MCF 10A (cell line): ENCODE measurements at regions of chr7 and their contacts with region 1.

Region 1: DNA sequence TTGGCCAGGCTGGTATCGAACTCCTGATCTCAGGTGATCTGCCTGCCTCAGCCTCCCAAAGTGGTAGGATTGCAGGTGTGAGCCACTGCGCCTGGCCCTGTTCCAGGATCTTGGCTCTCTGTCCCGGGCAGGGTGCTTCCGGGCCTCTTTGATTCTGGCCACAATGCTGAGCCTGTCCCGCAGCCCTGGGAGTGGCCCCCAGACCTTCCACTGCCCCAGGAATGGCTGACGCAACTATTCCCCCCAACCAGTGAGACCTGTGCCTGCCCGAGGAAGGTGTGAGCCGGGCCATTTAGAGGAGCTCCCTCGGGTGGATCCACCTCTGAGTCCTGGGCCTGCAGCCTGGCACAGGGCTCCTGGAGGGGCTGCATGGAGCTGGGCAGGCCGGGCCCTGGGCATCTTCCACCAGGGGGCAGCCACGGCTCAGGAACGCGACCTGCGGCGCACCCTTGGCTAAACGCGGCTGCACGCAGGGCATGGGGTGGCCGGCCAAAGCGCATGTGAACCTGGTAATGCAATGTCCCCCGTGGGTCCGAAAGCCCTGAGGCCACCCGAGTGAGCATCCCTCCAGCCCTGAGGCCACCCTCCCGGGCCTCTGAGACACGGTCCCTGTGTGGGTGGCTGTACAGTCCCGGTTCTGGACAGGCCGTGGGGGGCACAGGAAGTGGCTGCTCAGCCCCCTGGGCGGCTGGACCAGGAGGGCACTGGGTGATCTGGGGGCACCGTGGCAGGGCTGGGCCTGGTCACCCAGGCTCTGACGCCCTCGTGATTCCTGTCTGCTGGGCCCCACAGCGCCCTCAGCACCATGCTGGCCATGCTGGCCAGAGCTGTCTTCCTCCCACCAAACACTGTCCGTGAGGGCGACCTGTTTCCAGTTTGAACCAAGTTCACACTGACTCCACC is 24.8 kb downstream of the GRIFIN start:
- DNase-seq: peak; percentile 75
- H3K4me3 Mint-ChIP-seq: no peak overlapping the region
- H3K27ac Mint-ChIP-seq: no peak overlapping the region
- H3K4me1 Mint-ChIP-seq: no peaks in the 10 kb centered on the region
- H3K27me3 Mint-ChIP-seq: no peaks in the 10 kb centered on the region
- CTCF ChIP-seq: peak; percentile 98

Region 2: DNA sequence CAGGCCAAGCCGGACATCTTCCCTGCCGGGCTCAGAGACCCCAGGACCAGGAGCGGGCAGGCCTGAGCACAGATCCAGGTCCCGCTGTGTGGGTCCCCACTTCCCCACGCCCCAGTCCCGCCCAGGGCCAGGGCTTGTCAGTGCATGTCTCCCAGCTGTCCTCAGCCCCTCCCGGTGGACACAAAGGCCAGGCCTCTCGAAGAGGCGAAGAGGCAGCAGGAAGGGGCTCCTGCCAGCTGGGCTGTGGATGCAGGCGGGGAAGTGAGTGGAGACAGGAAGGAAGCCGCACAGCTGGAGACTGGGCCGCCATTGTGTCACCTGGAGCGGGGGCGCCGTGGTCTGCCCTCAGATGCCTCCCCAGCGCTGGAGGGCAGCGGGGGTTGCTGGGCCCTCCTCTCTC is 20.0 kb after region 1 on chr7:
- CTCF ChIA-PET with region 1: interaction called, 61 read pairs
- POLR2A ChIA-PET with region 1: interaction called, 7 read pairs
- intact Hi-C with region 1: loop called (anchors 1 kb)
- DNase-seq: peak; percentile 59
- H3K4me3 Mint-ChIP-seq: no peak overlapping the region
- H3K27ac Mint-ChIP-seq: peak overlapping the region; percentile 9
- H3K4me1 Mint-ChIP-seq: peaks cover 24% of the 10 kb centered on the region
- H3K27me3 Mint-ChIP-seq: no peaks in the 10 kb centered on the region
- CTCF ChIP-seq: no peak

Region 3: GRCh38 chr7:2680792-2681490 is 229.5 kb after region 1 on chr7:
- CTCF ChIA-PET with region 1: interaction called, 48 read pairs
- POLR2A ChIA-PET with region 1: interaction called, 5 read pairs
- intact Hi-C with region 1: loop called (anchors 1 kb)
- DNase-seq: peak; percentile 77
- H3K4me3 Mint-ChIP-seq: no peak overlapping the region
- H3K27ac Mint-ChIP-seq: no peak overlapping the region
- H3K4me1 Mint-ChIP-seq: no peaks in the 10 kb centered on the region
- H3K27me3 Mint-ChIP-seq: peaks cover 41% of the 10 kb centered on the region
- CTCF ChIP-seq: peak; percentile 69

Region 4: DNA sequence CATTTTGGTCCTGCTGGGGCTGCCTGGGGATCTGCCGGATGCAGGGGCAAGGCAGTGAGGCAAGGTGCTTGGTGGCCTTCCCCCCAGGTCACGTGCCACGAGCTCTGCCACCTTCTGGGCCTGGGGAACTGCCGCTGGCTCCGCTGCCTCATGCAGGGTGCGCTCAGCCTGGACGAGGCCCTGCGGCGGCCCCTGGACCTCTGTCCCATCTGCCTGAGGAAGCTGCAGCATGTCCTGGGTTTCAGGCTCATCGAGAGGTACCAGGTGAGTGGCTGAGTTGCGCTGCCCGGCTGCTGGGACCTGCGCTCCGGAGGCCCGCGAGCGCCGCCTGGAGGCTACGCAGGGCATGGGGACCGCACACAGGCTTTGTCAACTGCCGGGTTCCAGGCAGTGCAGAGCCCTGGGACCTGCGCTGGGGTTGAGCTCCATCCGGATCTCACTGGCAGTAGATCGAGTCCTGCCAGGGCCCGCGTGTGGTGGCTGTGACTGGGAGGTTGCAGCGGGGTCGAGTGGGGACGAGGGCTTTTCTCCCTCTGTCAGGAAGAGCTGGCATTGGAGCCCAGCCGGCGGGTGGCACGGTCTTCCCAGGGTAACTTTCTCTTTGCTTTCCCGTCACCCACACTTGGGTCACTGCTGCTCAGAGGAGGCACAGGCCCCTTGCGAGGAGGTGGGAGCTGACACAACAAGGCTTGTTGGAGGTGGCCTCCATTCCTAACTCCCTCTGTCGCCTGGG is 258.3 kb after region 1 on chr7:
- CTCF ChIA-PET with region 1: interaction called, 7 read pairs
- POLR2A ChIA-PET with region 1: no interaction called
- intact Hi-C with region 1: loop called (anchors 1 kb)
- DNase-seq: peak; percentile 60
- H3K4me3 Mint-ChIP-seq: no peak overlapping the region
- H3K27ac Mint-ChIP-seq: no peak overlapping the region
- H3K4me1 Mint-ChIP-seq: no peaks in the 10 kb centered on the region
- H3K27me3 Mint-ChIP-seq: no peaks in the 10 kb centered on the region
- CTCF ChIP-seq: peak; percentile 79